AG04449 (cell line): ENCODE measurements at regions of chrX and their contacts with region 1.

Region 1: DNA sequence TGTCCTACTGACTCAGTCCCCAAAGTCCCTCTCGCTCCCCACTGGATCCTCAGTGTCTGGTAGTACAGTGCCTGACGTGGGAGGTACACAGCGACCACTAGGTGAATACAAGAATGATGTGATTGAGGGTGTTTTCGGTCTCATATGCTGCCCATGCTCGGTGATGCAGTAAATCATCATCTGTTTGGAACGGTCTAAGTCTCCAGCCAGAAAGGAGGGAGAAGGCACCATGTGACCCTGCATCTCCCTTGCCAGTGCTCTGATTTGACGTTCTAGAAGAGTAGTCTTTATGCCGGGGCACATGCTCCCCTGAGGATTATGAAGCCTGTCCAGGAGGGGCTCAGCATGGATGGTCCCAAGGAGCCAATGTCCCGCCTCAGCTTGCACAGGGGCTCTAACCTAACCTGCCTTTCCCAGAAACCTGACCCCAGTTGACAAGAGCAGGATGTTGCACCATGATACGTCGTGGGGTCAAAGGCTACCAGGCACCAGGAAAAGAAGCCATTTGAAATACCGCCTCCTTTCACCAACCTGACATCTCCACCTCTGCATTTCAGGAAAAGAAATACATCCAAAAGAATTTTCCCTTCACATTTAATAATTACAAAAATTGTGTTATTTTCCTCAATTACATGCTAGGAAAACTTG is 13.8 kb upstream of the PLXNB3 start:
- DNase-seq: no peak
- H3K4me3 ChIP-seq: no peak overlapping the region
- CTCF ChIP-seq: no peak

Region 2: GRCh38 chrX:152861092-152861491 is 889.2 kb before region 1 on chrX:
- CTCF ChIA-PET with region 1: no interaction called
- POLR2A ChIA-PET with region 1: no interaction called
- DNase-seq: no peak
- H3K4me3 ChIP-seq: no peak overlapping the region
- CTCF ChIP-seq: no peak

Region 3: DNA sequence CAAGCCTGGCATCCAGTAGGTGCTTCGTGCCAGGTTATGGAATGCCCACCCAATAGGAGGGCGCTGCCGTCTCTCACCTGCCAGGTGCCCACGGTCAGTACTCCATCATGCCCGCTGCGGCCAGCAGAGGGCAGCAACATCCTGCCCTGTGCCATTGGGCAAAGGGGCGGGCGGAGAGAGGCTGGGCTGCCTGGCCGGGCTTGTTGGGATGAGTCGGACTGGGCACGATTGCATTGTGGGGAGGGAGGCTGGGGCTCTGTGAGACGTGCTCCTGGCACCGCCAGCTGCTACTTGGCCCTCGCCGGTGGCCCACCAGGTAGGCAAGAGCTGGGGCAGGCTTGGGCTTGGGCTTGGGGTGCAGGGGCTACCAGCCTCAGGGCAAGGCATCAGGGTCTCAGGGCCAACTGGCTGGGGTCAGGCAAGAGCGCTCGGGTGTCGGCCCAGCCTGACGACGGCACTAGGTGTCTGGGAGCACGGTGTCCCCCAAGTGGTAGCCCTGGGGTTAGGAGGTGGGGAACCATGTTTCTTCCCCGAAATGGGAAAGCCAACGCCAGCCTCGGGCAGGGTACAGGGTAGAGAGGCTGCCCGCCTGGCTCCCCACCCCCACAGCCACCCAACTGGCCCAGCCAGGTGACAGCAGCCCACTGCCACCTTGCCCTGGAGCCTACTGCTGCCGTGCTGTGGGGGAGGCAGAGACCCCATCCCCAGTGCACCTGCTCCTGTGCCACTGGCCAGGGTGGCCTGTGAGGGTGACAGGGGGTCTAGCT is 13.9 kb after region 1 on chrX and contains the start of gene PLXNB3:
- CTCF ChIA-PET with region 1: interaction called, 14 read pairs
- POLR2A ChIA-PET with region 1: no interaction called
- DNase-seq: peak; percentile 9
- H3K4me3 ChIP-seq: peak within 1 kb of the TSS; percentile 62
- CTCF ChIP-seq: peak; percentile 89